Activated T-helper 1 cell treated with anti-CD3 and anti-CD28 coated beads, Interleukin-12 subunit alpha, Interleukin-12 subunit beta, Interleukin-2, Interleukin-4 antibody, amounts not matched to agents 30 ng/mL and 10 ng/mL and 1 ng/mL, durations not matched to agents 14 hours and 24 hours and 36 hours (primary cell): ENCODE measurements at regions of chr13 and their contacts with region 1.

Region 1: DNA sequence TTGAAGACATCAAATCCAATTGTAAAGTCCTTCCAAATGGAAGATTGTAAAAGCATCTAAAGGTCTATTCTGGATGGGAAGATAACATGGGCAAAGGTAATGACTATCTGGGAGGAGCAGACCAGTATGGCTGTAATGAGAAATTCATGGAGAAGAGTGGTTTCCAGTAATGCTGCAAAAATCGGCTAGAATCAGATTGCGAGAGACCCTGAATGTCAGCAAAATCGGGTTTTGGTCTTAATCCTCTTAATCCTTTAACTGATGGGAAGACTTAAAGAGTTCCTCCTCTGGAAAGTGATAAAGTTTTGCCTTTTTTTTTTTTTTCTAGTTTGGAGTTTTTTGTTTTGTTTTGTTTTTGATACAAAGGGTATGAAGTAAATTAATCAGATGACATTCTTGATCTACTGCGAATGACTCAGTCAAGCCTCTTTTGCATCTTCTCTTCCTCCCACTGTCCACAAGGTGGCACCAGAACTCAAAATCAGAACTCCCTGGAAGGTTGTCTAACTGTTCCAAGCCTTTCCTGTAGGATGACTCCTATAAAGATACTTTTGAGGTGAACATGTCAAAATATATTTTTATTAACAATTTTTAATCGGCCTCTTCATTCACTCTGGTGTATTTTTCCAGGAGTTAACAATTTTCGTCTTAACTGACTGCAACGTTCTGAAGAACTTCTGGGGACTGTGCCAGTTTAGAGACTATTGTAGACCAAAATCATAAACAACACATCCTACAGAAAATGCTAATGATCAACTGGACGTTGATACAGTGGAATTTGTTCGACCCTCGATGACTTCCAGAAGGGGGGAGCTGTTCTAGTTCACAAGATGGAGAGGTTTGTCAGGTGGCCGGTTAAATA is 213.3 kb upstream of the MIR17HG start:
- DNase-seq: no peak
- H3K4me3 Mint-ChIP-seq: no peak overlapping the region
- H3K27ac Mint-ChIP-seq: no peak overlapping the region
- H3K4me1 Mint-ChIP-seq: no peaks in the 10 kb centered on the region
- H3K27me3 Mint-ChIP-seq: peaks cover 2% of the 10 kb centered on the region

Region 2: DNA sequence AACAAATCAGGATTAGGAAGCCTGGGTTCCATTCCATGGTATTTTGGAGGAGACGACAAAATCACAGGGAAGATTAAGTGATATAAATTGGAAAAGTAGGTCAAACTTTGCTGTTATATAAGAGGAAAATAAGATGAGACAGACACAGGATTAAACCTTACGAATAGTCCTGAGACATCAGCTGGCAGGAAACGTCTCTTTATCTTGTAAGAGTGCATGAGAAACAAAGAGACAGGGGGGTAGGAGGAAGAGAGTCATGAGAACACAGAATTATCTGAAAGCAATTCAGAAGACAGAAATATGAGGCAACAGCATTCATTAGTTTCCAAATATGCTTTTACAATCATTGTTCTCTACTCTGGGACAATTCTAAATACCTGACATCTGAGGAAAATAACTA is 97.3 kb before region 1 on chr13:
- intact Hi-C with region 1: no loop called
- DNase-seq: no peak
- H3K4me3 Mint-ChIP-seq: no peak overlapping the region
- H3K27ac Mint-ChIP-seq: no peak overlapping the region
- H3K4me1 Mint-ChIP-seq: no peaks in the 10 kb centered on the region
- H3K27me3 Mint-ChIP-seq: no peaks in the 10 kb centered on the region

Region 3: DNA sequence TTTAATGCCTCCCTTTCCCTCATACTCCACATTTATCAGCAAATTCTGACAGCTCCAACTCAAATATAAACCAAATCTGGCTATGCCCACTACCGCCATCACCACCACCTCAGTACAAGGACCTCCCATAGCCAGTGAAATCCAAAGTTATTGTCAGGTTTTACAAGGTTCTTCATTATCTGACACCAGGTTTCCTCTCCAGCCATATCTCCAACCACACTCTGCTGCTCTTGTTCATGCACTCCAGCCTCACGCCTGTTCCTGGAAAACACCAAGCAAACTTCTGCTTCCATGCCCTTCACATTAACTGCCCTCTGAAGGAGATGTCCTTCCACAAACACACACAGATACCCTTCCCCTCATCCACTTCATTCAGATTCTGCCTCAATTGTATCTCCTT is 111.1 kb after region 1 on chr13:
- intact Hi-C with region 1: loop called (anchors 1 kb)
- DNase-seq: no peak
- H3K4me3 Mint-ChIP-seq: no peak overlapping the region
- H3K27ac Mint-ChIP-seq: no peak overlapping the region
- H3K4me1 Mint-ChIP-seq: no peaks in the 10 kb centered on the region
- H3K27me3 Mint-ChIP-seq: no peaks in the 10 kb centered on the region

Region 4: GRCh38 chr13:91406619-91407018 is 272.4 kb after region 1 on chr13:
- intact Hi-C with region 1: loop called (anchors 1 kb)
- DNase-seq: no peak
- H3K4me3 Mint-ChIP-seq: no peak overlapping the region
- H3K27ac Mint-ChIP-seq: no peak overlapping the region
- H3K4me1 Mint-ChIP-seq: no peaks in the 10 kb centered on the region
- H3K27me3 Mint-ChIP-seq: peaks cover 39% of the 10 kb centered on the region

Region 5: GRCh38 chr13:91722267-91722884 is 588.2 kb after region 1 on chr13:
- intact Hi-C with region 1: loop called (anchors 2 kb)
- DNase-seq: no peak
- H3K4me3 Mint-ChIP-seq: no peak overlapping the region
- H3K27ac Mint-ChIP-seq: no peak overlapping the region
- H3K4me1 Mint-ChIP-seq: no peaks in the 10 kb centered on the region
- H3K27me3 Mint-ChIP-seq: no peaks in the 10 kb centered on the region

Region 6: GRCh38 chr13:92739306-92739818 is 1605.2 kb after region 1 on chr13:
- intact Hi-C with region 1: no loop called
- DNase-seq: no peak
- H3K4me3 Mint-ChIP-seq: no peak overlapping the region
- H3K27ac Mint-ChIP-seq: no peak overlapping the region
- H3K4me1 Mint-ChIP-seq: no peaks in the 10 kb centered on the region
- H3K27me3 Mint-ChIP-seq: no peaks in the 10 kb centered on the region

Region 7: GRCh38 chr13:93058301-93058700 is 1924.1 kb after region 1 on chr13:
- intact Hi-C with region 1: no loop called
- DNase-seq: no peak
- H3K4me3 Mint-ChIP-seq: no peak overlapping the region
- H3K27ac Mint-ChIP-seq: no peak overlapping the region
- H3K4me1 Mint-ChIP-seq: no peaks in the 10 kb centered on the region
- H3K27me3 Mint-ChIP-seq: no peaks in the 10 kb centered on the region